ENCODE measurements at regions of chr4 and their contacts with region 1.

Region 1: DNA sequence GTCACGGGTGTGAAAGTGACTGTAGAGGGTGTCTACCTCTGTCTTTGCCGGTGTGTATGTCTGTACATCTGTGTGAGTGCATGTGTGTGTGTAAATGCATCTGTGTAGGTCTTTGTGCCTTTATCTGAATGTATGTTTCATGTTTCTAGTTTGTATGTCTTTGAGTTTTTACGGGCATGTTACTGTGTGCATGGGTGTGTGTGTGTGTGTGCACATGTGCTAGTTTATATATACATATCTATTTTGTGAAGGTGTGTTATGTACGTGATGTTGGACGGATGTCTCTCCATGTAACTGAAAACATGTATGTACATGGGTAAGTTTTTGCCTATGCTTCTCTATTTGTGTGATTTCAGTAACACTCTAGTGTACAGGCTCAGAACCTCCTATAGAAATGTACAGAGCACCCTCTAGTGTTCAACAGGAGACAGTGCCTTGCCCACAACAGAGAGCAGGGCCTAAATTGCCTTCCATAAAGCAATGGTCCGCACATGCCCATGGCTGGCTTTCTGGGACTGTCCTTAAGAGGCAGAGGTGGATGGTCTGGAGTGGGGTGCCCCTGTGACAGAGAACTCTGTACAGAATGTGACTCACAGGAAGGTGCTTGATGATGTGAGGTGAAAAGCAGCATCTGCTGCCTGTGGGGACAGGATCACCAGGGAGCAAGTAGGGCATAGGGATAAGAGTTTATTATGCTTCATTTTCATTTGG is 343.5 kb downstream of the RAPGEF2 start:
- DNase-seq: peak; percentile 44
- ATAC-seq: peak; percentile 98

Region 2: DNA sequence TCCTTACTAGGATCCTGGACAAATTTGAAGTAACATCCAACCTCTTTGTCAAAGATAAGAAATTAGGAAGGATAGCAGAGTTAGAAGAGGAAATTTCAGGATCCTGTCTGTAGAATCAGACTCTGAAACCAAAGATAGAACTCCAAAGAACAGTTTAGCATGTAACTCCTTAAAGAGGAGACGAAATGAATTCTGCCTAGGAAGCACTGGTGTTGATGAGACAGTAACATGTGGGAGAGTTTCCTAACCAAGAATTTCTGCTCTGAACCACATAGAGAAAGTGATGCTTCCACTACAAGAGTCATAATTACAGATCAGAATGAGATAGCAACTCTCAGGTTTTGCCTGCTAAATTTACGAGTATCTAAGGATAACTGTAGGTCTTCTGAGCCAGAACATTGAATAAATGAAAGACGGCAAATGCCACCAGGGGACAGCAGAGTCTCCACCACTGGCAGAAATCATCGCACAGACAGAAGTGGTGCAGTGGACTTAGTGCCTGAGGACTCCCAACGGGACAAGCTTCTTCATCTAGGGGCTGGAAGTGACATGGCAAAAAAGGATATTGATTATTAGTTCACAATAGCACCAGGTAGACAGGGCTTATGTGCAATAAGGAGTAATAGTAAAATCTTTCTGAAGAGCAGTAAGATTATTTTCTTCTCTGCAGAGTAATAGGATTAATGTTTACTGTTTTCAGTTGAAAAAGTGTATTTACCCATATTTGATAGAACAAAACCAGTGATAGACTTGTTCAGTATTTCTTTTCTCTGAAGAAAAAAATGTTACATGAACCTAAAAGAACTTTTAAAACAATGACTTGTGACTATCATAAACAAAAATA is 716.5 kb before region 1 on chr4:
- intact Hi-C with region 1: loop called (anchors 10 kb)
- DNase-seq: peak; percentile 52
- ATAC-seq: peak; percentile 94

Region 3: DNA sequence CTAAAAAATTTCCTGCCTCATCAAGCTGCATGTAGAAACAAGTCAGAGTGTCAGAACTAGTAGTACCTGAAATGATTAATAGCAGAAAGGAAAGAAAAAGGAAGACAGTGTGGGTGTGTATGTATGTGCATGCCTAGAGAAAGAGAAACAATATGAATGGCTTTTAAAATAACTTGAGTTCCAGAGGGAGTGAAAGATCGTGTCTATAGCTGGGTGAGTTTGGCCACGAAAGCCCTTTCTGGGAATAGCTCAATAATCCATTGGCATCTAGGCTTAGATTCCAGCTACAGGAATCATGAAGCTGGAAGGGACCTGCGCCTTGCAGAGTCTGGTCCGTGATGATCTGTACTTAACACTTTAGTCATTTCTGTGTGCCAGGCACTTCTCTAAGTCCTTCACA is 147.9 kb before region 1 on chr4:
- intact Hi-C with region 1: loop called (anchors 10 kb)
- DNase-seq: no peak
- ATAC-seq: peak; percentile 64

Region 4: DNA sequence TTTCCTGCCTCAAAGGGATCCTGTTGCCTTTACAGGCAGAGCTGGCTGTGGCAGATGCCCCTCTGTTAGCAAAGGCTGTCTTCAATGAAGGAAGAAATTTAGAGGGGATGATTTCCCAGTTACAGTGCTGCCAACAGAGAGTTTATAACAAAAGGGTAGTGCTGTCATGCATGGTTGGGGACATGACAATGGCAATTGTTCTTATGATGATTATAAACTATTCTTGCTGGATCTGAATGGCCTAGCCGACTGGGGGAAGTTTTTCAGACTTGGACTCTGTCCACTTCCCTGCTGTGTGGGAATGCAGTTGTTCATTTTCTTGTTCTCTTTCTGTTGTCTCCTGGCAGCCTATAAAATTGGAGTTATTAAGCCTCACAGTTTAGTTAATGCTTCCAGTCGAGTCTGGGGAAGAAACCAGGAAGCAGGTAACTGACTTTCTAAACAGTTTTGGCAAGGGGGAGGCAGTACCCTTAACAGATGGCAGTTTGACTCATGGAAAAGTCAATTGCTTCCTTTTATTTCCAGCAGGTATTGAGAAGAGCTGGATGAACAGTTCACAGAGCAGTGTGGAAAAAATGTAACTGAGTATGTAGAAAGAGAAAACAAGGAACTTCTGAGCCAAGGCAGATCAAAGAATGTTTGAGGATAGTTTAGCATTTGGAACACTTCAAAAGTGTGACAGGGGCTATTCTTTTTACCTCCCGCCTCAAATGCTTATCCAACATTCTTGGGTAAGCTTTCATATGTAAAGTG is 239.1 kb after region 1 on chr4:
- intact Hi-C with region 1: no loop called
- DNase-seq: no peak
- ATAC-seq: no peak